Activated T-helper 2 cell treated with anti-CD3 and anti-CD28 coated beads, Interferon-gamma antibody, Interleukin-2, Interleukin-4, amounts not matched to agents 10 μg/mL and 5 μg/mL and 100 μg/mL, durations not matched to agents 14 hours and 24 hours and 36 hours (primary cell): ENCODE measurements at regions of chr6 and their contacts with region 1.

Region 1: DNA sequence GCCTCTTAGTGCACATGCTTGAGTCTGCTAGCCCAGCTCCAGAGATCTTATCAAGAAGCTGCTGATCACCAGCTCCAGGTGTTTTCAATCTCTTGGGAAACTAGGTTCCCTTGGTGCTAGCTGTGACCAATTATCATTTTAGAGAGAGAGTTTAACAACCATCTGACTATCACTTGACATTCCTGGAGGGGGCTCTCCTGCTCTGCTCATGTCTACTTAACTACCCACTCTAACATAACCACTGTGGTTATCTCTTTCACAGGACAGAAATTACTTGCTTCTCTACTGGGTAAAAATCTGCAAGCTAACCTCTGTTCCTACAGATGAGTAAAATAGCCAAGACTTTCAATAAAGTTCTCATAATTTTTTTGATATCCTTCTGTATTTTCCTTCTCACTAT is 823.4 kb upstream of the GJE1 start:
- DNase-seq: no peak
- H3K4me3 Mint-ChIP-seq: no peak overlapping the region
- H3K27ac Mint-ChIP-seq: no peak overlapping the region
- H3K4me1 Mint-ChIP-seq: peaks cover 7% of the 10 kb centered on the region
- H3K27me3 Mint-ChIP-seq: no peaks in the 10 kb centered on the region

Region 2: DNA sequence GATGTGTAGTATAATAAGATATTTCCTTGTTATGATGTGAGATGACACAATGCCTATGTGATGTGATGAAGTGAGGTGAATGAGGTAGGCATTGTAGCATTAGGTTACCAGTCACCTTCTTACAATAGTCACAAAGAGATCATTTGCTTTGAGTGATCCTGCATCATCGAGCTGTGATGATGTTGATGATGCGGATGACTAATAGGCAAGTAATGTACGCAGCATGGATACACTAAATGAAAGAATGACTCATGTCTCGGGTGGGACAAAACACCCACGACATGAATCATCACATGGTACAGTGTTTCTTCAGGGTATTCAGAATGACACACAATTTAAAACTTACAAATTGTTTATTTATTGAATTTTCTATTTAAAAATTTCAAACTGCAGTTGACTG is 17.1 kb after region 1 on chr6:
- intact Hi-C with region 1: loop called (anchors 2 kb)
- DNase-seq: no peak
- H3K4me3 Mint-ChIP-seq: no peak overlapping the region
- H3K27ac Mint-ChIP-seq: no peak overlapping the region
- H3K4me1 Mint-ChIP-seq: peaks cover 13% of the 10 kb centered on the region
- H3K27me3 Mint-ChIP-seq: peaks cover 2% of the 10 kb centered on the region

Region 3: GRCh38 chr6:141394125-141394536 is 84.8 kb after region 1 on chr6:
- intact Hi-C with region 1: loop called (anchors 5 kb)
- DNase-seq: no peak
- H3K4me3 Mint-ChIP-seq: no peak overlapping the region
- H3K27ac Mint-ChIP-seq: no peak overlapping the region
- H3K4me1 Mint-ChIP-seq: no peaks in the 10 kb centered on the region
- H3K27me3 Mint-ChIP-seq: peaks cover 5% of the 10 kb centered on the region

Region 4: DNA sequence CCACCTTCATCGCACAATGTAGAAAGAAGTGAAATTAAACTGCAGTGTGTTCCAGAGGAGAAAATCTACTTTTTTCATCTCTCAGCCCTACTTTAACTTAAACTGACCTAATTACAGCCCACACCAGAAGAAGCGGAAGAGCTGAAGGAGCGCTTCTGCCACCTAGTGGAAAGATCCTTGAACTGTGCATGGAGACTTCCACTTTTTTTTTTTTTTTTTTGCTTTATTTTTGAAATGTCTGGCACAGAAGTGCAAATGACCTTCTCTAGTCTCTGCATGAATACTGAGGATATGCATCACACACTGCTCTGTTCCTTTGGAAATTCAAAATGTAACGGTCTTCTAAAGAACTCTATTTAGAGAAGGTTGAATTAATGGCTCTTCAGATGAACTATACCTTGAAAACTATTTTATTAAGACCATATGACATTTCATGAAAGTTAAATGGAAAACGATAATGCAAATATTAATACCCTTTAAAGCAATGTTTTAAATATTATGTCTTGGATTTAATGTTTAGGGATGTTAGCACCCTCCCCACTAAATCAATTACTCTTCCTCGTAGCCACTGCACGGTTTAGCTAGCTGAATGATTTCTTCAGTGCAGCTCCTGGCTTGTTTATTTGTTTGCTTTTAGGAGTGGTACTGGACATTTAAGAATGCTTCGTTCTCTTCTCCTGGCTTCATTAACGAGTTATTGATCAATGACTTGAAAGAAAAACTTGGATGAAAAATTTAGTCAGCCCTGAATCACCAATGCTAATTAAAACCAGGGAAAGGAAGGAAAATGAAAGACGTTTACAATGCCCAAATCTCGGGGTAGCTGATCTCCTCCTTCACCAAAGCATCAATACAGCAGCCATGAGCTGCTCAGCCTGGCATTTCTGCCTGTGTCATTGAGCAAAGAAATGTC is 253.8 kb after region 1 on chr6:
- intact Hi-C with region 1: loop called (anchors 5 kb)
- DNase-seq: peak; percentile 32
- H3K4me3 Mint-ChIP-seq: peak overlapping the region; percentile 59
- H3K27ac Mint-ChIP-seq: peak overlapping the region; percentile 48
- H3K4me1 Mint-ChIP-seq: peaks cover 18% of the 10 kb centered on the region
- H3K27me3 Mint-ChIP-seq: peaks cover 10% of the 10 kb centered on the region